Activated CD4-positive, alpha-beta T cell treated with anti-CD3 and anti-CD28 coated beads for 36 hours (primary cell): ENCODE measurements at regions of chr1 and their contacts with region 1.

Region 1: GRCh38 chr1:151888972-151889570 is 20.2 kb downstream of the THEM4 start:
- DNase-seq: no peak
- ATAC-seq: peak; percentile 57
- H3K4me3 Mint-ChIP-seq: no peak overlapping the region
- H3K27ac Mint-ChIP-seq: no peak overlapping the region
- H3K4me1 Mint-ChIP-seq: peaks cover 25% of the 10 kb centered on the region
- H3K27me3 Mint-ChIP-seq: no peaks in the 10 kb centered on the region

Region 2: GRCh38 chr1:151867785-151868411 is 21.2 kb before region 1 on chr1:
- CTCF ChIA-PET with region 1: no interaction called
- POLR2A ChIA-PET with region 1: no interaction called
- intact Hi-C with region 1: no loop called
- DNase-seq: peak; percentile 39
- ATAC-seq: peak; percentile 82
- H3K4me3 Mint-ChIP-seq: no peak overlapping the region
- H3K27ac Mint-ChIP-seq: peak overlapping the region; percentile 65
- H3K4me1 Mint-ChIP-seq: peaks cover 12% of the 10 kb centered on the region
- H3K27me3 Mint-ChIP-seq: no peaks in the 10 kb centered on the region

Region 3: DNA sequence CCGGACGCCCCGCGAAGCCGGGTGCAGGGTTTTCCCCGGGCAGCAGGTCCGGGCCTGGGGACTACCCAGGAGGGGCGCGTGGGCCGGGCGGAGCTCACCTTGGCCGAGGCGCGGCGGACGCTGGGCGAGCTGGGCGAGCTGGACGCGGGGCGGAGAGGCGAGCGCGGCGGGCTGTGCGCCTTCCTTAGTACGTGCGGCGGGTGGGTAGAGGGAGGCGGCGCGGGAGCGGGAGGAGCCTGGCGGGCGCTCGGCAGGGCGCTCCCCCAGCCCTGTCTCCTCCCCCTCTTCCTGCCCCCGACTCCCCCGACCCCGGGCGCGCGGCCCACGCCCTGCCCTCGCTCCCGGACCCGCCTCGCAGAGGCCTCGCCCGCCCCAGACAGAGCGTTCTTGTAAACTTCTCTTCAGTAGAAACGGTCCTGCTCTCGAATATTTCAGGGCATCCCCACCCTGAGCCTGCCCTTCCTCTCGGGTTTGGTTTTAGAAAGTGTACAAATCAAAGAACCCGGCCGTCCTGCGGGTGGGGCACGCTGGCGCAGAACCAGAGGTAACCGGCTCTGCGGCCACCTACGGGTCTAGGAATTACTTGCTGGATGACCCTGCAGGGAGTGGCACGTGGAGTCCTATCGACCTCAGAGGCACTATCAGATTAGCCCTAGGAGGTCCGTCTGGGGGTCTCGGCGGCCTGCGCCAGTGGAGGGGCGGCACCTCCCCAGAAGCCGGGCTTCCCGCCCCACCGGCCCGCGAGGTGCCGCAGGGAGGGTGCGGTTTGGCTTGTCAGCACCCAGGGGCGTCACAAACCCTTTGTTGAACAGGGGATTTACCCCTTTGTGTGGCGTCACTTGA is 104.8 kb after region 1 on chr1 and contains the start of gene S100A10:
- CTCF ChIA-PET with region 1: interaction called, 3 read pairs
- POLR2A ChIA-PET with region 1: interaction called, 3 read pairs
- intact Hi-C with region 1: loop called (anchors 1 to 5 kb)
- DNase-seq: peak; percentile 85
- ATAC-seq: peak; percentile 79
- H3K4me3 Mint-ChIP-seq: peak within 1 kb of the TSS; percentile 90
- H3K27ac Mint-ChIP-seq: peak within 1 kb of the TSS; percentile 94
- H3K4me1 Mint-ChIP-seq: peaks cover 48% of the 10 kb centered on the region
- H3K27me3 Mint-ChIP-seq: no peaks in the 10 kb centered on the region
- total RNA-seq, gene S100A10: 230 to 246 TPM